Adrenal gland (tissue), 19 donors: ENCODE measurements at regions of chrX and their contacts with region 1.

Region 1: GRCh38 chrX:31213941-31214340 is 142.1 kb upstream of the FTHL17 start:
- DNase-seq: peak in 1 of 7 donors; percentile 12
- H3K4me3 ChIP-seq: no peak overlapping the region
- H3K27ac ChIP-seq: no peak overlapping the region
- H3K4me1 ChIP-seq: peaks cover 0 to 9% of the 10 kb centered on the region in 2 donors
- H3K27me3 ChIP-seq: no peaks in the 10 kb centered on the region
- CTCF ChIP-seq: peak in 5 of 6 experiments; percentile 23 to 50 (median 30)
- POLR2A ChIP-seq: no peak

Region 2: GRCh38 chrX:31423609-31424189 is 209.8 kb after region 1 on chrX:
- intact Hi-C with region 1: loop called in 1 of 2 experiments (anchors 10 kb)
- DNase-seq: peak; percentile 16 to 68 (median 34)
- H3K4me3 ChIP-seq: peak overlapping the region in 1 of 4 donors; percentile 2
- H3K27ac ChIP-seq: peak overlapping the region in 1 of 5 donors; percentile 2
- H3K4me1 ChIP-seq: no peaks in the 10 kb centered on the region
- H3K27me3 ChIP-seq: no peaks in the 10 kb centered on the region
- CTCF ChIP-seq: peak in 5 of 6 experiments; percentile 11 to 33 (median 26)
- POLR2A ChIP-seq: no peak

Region 3: GRCh38 chrX:31679861-31680260 is 465.9 kb after region 1 on chrX:
- intact Hi-C with region 1: no loop called
- DNase-seq: no peak
- H3K4me3 ChIP-seq: no peak overlapping the region
- H3K27ac ChIP-seq: no peak overlapping the region
- H3K4me1 ChIP-seq: no peaks in the 10 kb centered on the region
- H3K27me3 ChIP-seq: no peaks in the 10 kb centered on the region
- CTCF ChIP-seq: no peak
- POLR2A ChIP-seq: no peak